H1 (cell line): ENCODE measurements at regions of chr2 and their contacts with region 1.

Region 1: GRCh38 chr2:55120634-55121359 is 70.5 kb upstream of the RTN4 start:
- DNase-seq: no peak
- H3K4me3 ChIP-seq: no peak overlapping the region
- H3K27ac ChIP-seq: no peak overlapping the region
- H3K4me1 ChIP-seq: peaks cover 2 to 9% (median 6%) of the 10 kb centered on the region in 4 experiments; a peak in 5 of 7 replicates
- H3K27me3 ChIP-seq: no peaks in the 10 kb centered on the region
- CTCF ChIP-seq: no peak
- EP300 ChIP-seq: no peak
- POLR2A ChIP-seq: no peak
- RAD21 ChIP-seq: no peak

Region 2: DNA sequence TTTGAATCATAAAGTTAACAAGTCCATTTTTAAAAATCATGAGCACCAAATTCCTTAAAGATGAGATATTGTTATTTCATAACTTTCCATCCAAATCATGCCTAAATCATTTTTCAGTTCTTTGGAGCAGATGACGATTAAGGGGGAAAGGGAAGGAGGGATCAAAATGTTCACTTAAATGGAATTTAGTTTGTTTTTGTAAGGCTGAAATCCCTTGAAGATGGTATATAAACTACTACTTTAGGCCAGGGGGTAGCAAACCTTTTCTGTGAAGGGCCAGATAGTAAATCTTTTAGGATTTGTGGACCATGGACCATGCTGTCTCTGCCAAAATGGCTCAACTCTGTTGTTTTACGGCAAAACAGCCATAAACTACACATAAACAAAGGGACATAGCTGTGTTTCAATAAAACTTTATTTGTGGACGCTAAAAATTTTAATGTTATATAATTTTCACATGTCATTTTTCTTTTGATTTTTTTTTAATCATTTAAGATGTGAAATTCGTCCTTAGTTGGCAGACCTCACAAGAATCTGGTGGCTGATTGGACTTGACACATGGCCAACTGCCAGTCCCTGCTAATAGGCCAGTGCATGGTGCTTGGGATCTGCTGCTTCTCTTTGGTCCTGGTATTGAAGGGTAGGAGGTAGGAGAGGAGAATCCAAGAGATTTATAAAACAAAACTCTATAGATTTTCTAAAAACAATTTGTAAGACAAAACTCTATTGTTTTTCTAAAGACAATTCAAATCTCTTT is 18.6 kb before region 1 on chr2:
- CTCF ChIA-PET with region 1: interaction called, 26 read pairs
- POLR2A ChIA-PET with region 1: interaction called, 3 read pairs
- DNase-seq: no peak
- H3K4me3 ChIP-seq: no peak overlapping the region
- H3K27ac ChIP-seq: no peak overlapping the region
- H3K4me1 ChIP-seq: peaks cover 0 to 4% (median 0%) of the 10 kb centered on the region in 4 experiments; a peak in 2 of 7 replicates
- H3K27me3 ChIP-seq: no peaks in the 10 kb centered on the region
- CTCF ChIP-seq: no peak
- EP300 ChIP-seq: no peak
- POLR2A ChIP-seq: no peak
- RAD21 ChIP-seq: no peak

Region 3: DNA sequence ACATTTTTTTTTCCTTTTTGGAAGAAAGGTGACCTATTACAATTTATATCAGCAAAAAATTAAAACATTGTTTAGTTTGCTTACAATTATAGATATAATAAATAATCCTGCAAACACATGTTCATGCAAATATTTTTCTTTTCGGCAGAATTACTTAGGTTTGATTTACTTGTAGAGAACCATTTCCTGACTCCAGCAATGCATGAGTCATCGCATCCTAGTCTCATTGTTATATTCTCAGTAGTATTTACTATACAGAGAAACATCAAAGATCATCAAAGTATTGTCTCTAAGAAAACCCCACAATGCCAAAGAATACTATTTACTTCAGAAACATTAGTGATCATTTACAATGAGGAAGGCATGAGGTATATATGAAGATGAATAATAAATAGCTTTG is 188.6 kb after region 1 on chr2:
- CTCF ChIA-PET with region 1: no interaction called
- POLR2A ChIA-PET with region 1: no interaction called
- DNase-seq: no peak
- H3K4me3 ChIP-seq: no peak overlapping the region
- H3K27ac ChIP-seq: no peak overlapping the region
- H3K4me1 ChIP-seq: no peaks in the 10 kb centered on the region
- H3K27me3 ChIP-seq: no peaks in the 10 kb centered on the region
- CTCF ChIP-seq: no peak
- EP300 ChIP-seq: no peak
- POLR2A ChIP-seq: no peak
- RAD21 ChIP-seq: no peak